ENCODE measurements at regions of chr19 and their contacts with region 1.

Region 1: GRCh38 chr19:42219812-42220750 is at the start of gene ZNF526:
- DNase-seq: peak; percentile 97
- ATAC-seq: peak; percentile 82
- H3K4me3 ChIP-seq: peak within 1 kb of the TSS; percentile 72 to 96 (median 85)
- H3K4me3 Mint-ChIP-seq: peak within 1 kb of the TSS; percentile 96
- H3K27ac ChIP-seq: peak within 1 kb of the TSS; percentile 66 to 88
- H3K27ac Mint-ChIP-seq: peak within 1 kb of the TSS; percentile 92
- H3K4me1 ChIP-seq: peaks cover 41 to 51% of the 10 kb centered on the region in 2 donors
- H3K4me1 Mint-ChIP-seq: peaks cover 59% of the 10 kb centered on the region
- H3K27me3 ChIP-seq: no peaks in the 10 kb centered on the region
- H3K27me3 Mint-ChIP-seq: no peaks in the 10 kb centered on the region
- CTCF ChIP-seq: no peak
- total RNA-seq, gene ZNF526: 19.0 and 21.3 TPM in 2 replicates

Region 2: GRCh38 chr19:42075616-42076379 is 144.3 kb before region 1 on chr19 and contains the start of gene ZNF574:
- CTCF ChIA-PET with region 1: no interaction called
- POLR2A ChIA-PET with region 1: no interaction called
- intact Hi-C with region 1: loop called (anchors 1 kb)
- DNase-seq: peak; percentile 100
- ATAC-seq: peak; percentile 94
- H3K4me3 ChIP-seq: peak within 1 kb of the TSS; percentile 56 to 93 (median 86)
- H3K4me3 Mint-ChIP-seq: peak within 1 kb of the TSS; percentile 97
- H3K27ac ChIP-seq: peak within 1 kb of the TSS; percentile 95 to 99
- H3K27ac Mint-ChIP-seq: peak within 1 kb of the TSS; percentile 99
- H3K4me1 ChIP-seq: peaks cover 20 to 23% of the 10 kb centered on the region in 2 donors
- H3K4me1 Mint-ChIP-seq: peaks cover 35% of the 10 kb centered on the region
- H3K27me3 ChIP-seq: no peaks in the 10 kb centered on the region
- H3K27me3 Mint-ChIP-seq: peaks cover 5% of the 10 kb centered on the region
- CTCF ChIP-seq: no peak
- total RNA-seq, gene ZNF574: 27.4 and 28.4 TPM in 2 replicates

Region 3: DNA sequence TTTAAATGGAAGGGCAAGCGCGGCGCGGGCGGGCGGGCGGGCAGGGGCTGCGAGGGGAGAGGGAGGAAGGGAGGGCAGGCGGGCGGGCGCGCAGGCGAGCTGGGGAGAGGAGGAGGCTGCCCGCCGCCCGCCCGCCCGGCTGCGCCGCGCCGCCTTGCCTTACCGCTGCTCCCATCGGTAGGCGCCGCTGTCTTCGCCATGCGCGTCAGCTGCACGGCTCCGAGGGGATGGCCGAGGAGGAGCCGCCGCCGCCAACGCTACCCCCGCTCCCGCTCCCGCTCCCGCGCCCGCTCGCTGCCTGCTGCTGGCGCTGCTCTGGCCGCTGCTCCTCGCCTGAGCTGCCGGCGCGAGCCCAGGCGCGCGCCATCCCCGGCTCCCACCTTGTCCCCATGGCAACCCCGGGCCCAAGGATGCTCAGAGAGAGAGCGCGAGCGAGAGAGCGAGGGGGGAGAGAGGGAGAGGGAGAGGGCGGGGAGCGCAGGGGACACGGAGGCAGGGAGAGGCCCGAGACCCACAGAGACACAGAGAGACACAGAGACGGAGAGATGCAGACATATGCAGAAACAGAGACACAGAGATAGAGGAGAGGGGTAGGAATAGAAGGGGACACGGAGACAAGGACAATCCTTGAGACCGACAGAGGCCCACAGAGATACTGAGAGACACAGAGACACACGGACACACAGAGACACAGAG is 42.9 kb before region 1 on chr19:
- CTCF ChIA-PET with region 1: interaction called, 3 read pairs
- POLR2A ChIA-PET with region 1: interaction called, 3 read pairs
- intact Hi-C with region 1: loop called (anchors 2 kb)
- DNase-seq: peak; percentile 85
- ATAC-seq: peak; percentile 93
- H3K4me3 ChIP-seq: peak overlapping the region; percentile 3 to 83 (median 48)
- H3K4me3 Mint-ChIP-seq: no peak overlapping the region
- H3K27ac ChIP-seq: no peak overlapping the region
- H3K27ac Mint-ChIP-seq: no peak overlapping the region
- H3K4me1 ChIP-seq: peaks cover 26 to 49% of the 10 kb centered on the region in 2 donors
- H3K4me1 Mint-ChIP-seq: peaks cover 15% of the 10 kb centered on the region
- H3K27me3 ChIP-seq: peaks cover 0 to 49% (median 39%) of the 10 kb centered on the region in 4 experiments
- H3K27me3 Mint-ChIP-seq: peaks cover 20% of the 10 kb centered on the region
- CTCF ChIP-seq: peak; percentile 48

Region 4: DNA sequence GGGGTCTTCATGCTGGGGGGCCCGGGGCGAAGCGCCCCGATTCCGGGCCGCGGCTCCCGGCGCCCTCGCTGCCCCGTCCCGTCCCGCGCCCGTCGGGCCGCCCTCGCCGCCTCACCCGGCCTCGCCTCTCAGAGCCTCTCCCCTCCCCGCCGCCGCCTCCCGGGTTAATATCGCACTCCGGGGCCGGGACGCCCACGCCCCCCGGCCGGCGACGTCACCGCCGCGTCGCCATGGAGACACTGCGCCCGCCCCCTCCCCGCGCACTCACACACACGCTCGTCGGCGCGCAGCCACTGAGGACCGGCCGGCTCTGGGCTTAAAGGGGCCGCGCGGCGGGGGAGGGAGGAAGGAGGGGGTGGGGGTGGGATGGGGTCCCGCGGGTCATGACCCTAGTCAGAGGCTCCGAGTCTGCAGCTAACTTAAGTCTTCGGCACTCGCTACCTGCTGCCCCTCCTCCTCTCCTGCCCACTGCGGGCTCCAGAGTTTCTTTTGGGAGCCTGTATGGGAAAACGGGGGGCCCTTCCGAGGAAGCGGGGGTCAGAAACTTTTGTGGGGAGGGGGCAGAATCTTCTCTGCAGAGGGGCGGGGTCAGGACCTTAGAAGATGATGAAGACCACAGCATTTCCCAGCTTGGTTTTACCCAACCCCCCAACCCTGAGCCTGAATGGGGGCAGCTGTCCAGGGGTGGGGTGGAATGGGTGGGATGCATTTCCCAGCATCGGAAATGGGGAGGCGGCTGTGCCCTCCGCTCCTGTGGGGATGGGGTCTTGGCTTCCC is 35.1 kb after region 1 on chr19 and contains the start of gene ERF:
- CTCF ChIA-PET with region 1: no interaction called
- POLR2A ChIA-PET with region 1: no interaction called
- intact Hi-C with region 1: loop called (anchors 1 kb)
- DNase-seq: peak; percentile 97
- ATAC-seq: peak; percentile 68
- H3K4me3 ChIP-seq: peak within 1 kb of the TSS; percentile 36 to 100 (median 99)
- H3K4me3 Mint-ChIP-seq: peak within 1 kb of the TSS; percentile 85
- H3K27ac ChIP-seq: peak within 1 kb of the TSS; percentile 85 to 94
- H3K27ac Mint-ChIP-seq: peak within 1 kb of the TSS; percentile 96
- H3K4me1 ChIP-seq: peaks cover 23 to 41% of the 10 kb centered on the region in 2 donors
- H3K4me1 Mint-ChIP-seq: peaks cover 24% of the 10 kb centered on the region
- H3K27me3 ChIP-seq: peaks cover 0 to 4% (median 0%) of the 10 kb centered on the region in 4 experiments
- H3K27me3 Mint-ChIP-seq: no peaks in the 10 kb centered on the region
- CTCF ChIP-seq: no peak
- total RNA-seq, gene ERF: 48.6 and 62.1 TPM in 2 replicates

Region 5: DNA sequence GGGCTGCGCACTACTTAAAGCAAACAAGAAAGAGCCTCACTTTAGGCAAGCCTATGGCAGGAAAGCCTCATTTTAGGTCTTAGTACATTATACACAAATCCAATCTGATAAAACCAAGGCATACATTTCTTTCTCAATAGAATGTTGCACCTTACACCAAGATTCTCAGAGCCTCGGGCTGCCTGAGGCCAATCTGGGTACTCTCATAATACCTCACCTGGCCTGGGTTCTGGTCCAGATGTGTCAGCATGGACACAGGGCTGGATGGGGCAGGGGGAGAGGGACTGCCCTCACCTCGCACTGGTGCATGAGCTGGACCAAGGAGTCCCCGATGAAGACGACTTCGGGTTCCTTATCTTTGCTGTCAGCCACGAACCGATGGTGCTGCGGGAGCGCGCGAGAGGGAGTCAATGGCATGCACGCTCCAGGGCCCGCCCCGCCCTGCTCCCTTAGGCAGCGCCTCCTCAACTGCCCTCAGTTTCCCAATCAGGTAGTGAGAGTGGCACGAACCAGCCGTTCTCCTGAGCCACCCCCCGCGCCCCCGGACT is 81.6 kb after region 1 on chr19 and contains the start of gene PRR19:
- CTCF ChIA-PET with region 1: no interaction called
- POLR2A ChIA-PET with region 1: no interaction called
- intact Hi-C with region 1: loop called (anchors 1 kb)
- DNase-seq: no peak
- ATAC-seq: peak; percentile 3
- H3K4me3 ChIP-seq: peak within 1 kb of the TSS; percentile 42 to 80 (median 66)
- H3K4me3 Mint-ChIP-seq: peak within 1 kb of the TSS; percentile 91
- H3K27ac ChIP-seq: peak within 1 kb of the TSS in 1 of 2 donors; percentile 3
- H3K27ac Mint-ChIP-seq: peak within 1 kb of the TSS; percentile 78
- H3K4me1 ChIP-seq: peaks cover 17 to 22% of the 10 kb centered on the region in 2 donors
- H3K4me1 Mint-ChIP-seq: peaks cover 25% of the 10 kb centered on the region
- H3K27me3 ChIP-seq: no peaks in the 10 kb centered on the region
- H3K27me3 Mint-ChIP-seq: no peaks in the 10 kb centered on the region
- CTCF ChIP-seq: no peak
- total RNA-seq, gene PRR19: 0.41 and 0.54 TPM in 2 replicates